Activated naive CD4-positive, alpha-beta T cell treated with anti-CD3 and anti-CD28 coated beads for 36 hours (primary cell): ENCODE measurements at regions of chr12 and their contacts with region 1.

Region 1: DNA sequence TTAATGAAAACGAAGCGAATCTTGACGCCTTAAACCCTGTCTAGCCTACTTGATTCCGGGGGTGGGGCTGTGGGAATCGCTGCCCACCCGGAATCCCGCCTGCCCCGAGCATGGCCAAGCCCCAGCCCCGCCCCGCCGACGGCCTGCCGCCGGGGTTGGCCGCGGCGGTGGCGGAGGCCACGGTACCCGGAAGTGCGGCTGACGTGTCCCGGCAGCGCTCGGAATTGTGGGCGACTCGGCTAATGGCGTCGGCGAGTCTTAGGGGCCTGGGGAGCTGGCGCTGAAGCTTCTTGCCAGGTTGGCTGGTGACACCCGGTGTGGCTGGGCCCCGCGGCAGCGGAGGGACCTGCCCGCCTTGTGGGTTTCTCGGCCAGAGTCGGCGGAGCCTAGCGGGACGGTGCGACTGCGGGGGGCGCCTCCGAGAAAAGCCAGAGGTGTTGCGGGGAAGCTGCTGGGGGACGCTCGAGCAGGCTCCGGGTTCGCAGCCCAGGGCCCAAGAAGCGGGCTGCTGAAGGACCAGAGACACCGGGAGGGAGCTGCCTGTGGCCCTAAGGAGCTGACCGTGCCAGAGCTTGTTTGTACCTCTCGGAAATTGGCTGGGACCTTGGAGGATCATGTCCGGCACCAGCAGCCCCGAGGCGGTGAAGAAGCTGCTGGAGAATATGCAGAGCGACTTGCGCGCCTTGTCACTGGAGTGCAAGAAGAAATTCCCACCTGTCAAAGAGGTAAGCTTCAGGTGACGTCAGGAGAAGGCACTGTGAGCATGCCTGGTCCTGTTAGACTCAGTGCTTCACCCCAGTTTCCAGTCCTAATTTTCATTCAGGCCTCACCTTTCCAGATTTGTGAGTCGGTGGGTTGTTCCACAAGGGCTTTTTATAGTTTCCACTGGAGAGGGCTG is at the start of gene MON2:
- DNase-seq: peak; percentile 87
- H3K4me3 Mint-ChIP-seq: peak within 1 kb of the TSS; percentile 74
- H3K27ac Mint-ChIP-seq: peak within 1 kb of the TSS; percentile 88
- H3K4me1 Mint-ChIP-seq: peaks cover 15% of the 10 kb centered on the region
- H3K27me3 Mint-ChIP-seq: no peaks in the 10 kb centered on the region
- total RNA-seq, gene MON2: 29.2 to 29.8 TPM

Region 2: GRCh38 chr12:62268956-62269355 is 197.9 kb before region 1 on chr12:
- CTCF ChIA-PET with region 1: no interaction called
- intact Hi-C with region 1: no loop called
- DNase-seq: no peak
- H3K4me3 Mint-ChIP-seq: no peak overlapping the region
- H3K27ac Mint-ChIP-seq: peak overlapping the region; percentile 83
- H3K4me1 Mint-ChIP-seq: peaks cover 81% of the 10 kb centered on the region
- H3K27me3 Mint-ChIP-seq: no peaks in the 10 kb centered on the region

Region 3: DNA sequence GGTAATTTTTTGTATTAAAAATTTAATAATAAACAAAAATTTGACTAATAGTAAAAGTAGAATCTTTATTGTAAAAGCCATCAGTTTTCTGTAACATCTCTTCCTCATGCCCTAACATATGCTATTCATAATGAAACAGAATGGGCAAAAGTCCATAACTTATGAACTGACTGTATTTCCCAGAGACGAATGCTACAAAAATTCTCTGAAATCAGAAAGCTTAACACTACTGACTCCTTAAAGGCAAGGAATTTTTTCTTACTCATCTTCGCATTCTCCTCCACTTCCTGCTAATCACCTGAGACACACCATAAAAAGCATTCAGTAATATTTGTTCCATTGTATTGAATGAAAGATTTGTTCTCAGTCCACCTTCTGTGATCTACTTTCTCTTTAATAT is 17.4 kb after region 1 on chr12:
- CTCF ChIA-PET with region 1: interaction called, 3 read pairs
- intact Hi-C with region 1: loop called (anchors 2 kb)
- DNase-seq: no peak
- H3K4me3 Mint-ChIP-seq: no peak overlapping the region
- H3K27ac Mint-ChIP-seq: no peak overlapping the region
- H3K4me1 Mint-ChIP-seq: peaks cover 20% of the 10 kb centered on the region
- H3K27me3 Mint-ChIP-seq: no peaks in the 10 kb centered on the region

Region 4: DNA sequence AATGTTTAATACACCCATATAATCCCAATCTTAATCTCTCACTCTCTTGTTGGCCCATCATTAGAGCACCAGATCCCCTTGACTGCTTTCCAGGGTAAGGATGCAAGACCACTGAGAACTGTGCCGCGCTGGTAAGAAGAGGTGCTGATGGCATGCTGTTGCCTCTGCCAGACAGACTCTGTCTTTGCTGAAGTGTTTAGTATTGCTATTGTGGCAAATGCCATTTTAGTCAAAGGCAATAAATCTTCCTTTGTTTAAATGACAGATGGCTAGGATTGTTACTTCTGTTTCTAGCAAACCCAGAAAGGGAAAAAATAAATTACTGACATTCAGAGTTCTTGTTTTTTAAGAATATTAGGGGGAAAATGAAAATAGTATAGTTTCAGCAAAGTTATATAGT is 152.1 kb after region 1 on chr12:
- CTCF ChIA-PET with region 1: no interaction called
- intact Hi-C with region 1: no loop called
- DNase-seq: no peak
- H3K4me3 Mint-ChIP-seq: no peak overlapping the region
- H3K27ac Mint-ChIP-seq: no peak overlapping the region
- H3K4me1 Mint-ChIP-seq: peaks cover 9% of the 10 kb centered on the region
- H3K27me3 Mint-ChIP-seq: peaks cover 2% of the 10 kb centered on the region

Region 5: DNA sequence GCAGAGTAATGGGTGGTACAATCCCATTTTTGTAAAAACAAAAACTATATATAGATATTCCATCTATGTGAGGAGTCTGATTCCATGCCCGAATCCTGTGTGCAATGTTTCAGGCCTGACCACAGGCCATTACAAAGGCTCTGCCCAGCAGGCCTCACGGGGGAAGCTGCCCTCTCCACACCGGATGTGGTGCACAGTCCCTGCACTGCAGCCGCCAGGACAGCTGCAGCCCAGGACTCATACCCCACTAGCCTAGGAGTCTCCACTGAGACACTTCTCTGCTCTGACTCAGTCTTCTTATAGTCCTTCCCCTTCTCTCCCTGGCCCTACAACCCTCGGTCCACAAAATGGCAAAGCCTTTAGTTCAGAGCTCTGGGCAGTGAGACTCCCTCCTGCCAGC is 277.7 kb after region 1 on chr12:
- CTCF ChIA-PET with region 1: no interaction called
- intact Hi-C with region 1: no loop called
- DNase-seq: no peak
- H3K4me3 Mint-ChIP-seq: no peak overlapping the region
- H3K27ac Mint-ChIP-seq: no peak overlapping the region
- H3K4me1 Mint-ChIP-seq: no peaks in the 10 kb centered on the region
- H3K27me3 Mint-ChIP-seq: no peaks in the 10 kb centered on the region